ENCODE measurements at regions of chr2 and their contacts with region 1.

Region 1: GRCh38 chr2:85750587-85751575 is 2.9 kb upstream of the ATOH8 start:
- DNase-seq: peak; percentile 47
- ATAC-seq: peak; percentile 75
- H3K4me3 ChIP-seq: no peak overlapping the region
- H3K27ac ChIP-seq: no peak overlapping the region; the same call in 1 of the 2 replicates
- H3K4me1 ChIP-seq: peaks cover 20 to 36% of the 10 kb centered on the region in 2 experiments
- H3K27me3 ChIP-seq: peaks cover 50% of the 10 kb centered on the region
- CTCF ChIP-seq: peak; percentile 89 to 94 (median 91)
- POLR2A ChIP-seq: no peak
- RAD21 ChIP-seq: peak; percentile 91

Region 2: DNA sequence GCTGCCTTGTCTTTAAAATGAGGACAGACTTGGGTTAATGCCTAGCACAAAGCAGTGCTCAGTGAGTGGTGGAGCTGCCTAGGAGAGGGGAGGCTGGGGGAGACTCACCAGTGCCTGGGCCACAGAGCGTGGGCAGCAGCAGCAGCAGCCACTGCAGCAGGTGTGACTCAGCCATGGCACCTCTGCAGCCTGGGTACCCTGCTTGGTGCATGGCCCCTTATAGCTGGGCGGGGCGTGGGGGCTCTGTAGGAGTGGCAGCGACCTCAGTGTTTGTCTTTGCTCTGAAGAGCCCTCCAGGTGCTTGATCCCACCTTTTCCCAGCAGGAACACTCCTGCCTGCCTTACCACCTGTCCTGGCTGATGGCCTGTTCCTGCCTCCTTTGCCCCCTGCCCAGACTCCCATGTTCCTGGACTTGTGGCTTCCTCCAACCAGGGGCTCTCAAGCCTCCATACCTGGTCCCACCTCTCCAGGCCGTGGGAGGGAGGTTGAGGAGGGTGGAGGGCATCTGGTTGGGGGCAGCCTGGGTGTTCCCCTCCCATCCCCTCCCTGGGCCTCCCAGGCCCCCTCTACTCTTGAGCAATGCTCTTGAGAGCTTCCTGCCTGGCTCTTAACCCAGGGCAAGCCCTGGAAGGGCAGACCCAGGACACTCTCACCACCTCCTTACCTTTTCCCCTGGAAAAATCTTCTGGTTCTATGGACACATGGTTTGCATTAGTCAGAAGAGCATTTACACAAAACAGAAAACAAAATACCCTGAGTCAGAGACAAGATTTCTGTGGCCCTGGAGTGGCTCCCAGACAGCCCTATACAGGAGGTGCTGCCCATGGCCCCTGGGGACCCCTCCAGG is 82.6 kb before region 1 on chr2 and contains the start of gene SFTPB:
- CTCF ChIA-PET with region 1: no interaction called
- POLR2A ChIA-PET with region 1: no interaction called
- RAD21 ChIA-PET with region 1: no interaction called
- intact Hi-C with region 1: no loop called
- DNase-seq: no peak
- ATAC-seq: no peak
- H3K4me3 ChIP-seq: no peak within 1 kb of the TSS
- H3K27ac ChIP-seq: no peak within 1 kb of the TSS
- H3K4me1 ChIP-seq: peaks cover 0 to 1% of the 10 kb centered on the region in 2 experiments; a peak in 1 of 4 replicates
- H3K27me3 ChIP-seq: no peaks in the 10 kb centered on the region
- CTCF ChIP-seq: no peak
- POLR2A ChIP-seq: no peak
- RAD21 ChIP-seq: no peak
- total RNA-seq, gene SFTPB: 13.3 TPM

Region 3: DNA sequence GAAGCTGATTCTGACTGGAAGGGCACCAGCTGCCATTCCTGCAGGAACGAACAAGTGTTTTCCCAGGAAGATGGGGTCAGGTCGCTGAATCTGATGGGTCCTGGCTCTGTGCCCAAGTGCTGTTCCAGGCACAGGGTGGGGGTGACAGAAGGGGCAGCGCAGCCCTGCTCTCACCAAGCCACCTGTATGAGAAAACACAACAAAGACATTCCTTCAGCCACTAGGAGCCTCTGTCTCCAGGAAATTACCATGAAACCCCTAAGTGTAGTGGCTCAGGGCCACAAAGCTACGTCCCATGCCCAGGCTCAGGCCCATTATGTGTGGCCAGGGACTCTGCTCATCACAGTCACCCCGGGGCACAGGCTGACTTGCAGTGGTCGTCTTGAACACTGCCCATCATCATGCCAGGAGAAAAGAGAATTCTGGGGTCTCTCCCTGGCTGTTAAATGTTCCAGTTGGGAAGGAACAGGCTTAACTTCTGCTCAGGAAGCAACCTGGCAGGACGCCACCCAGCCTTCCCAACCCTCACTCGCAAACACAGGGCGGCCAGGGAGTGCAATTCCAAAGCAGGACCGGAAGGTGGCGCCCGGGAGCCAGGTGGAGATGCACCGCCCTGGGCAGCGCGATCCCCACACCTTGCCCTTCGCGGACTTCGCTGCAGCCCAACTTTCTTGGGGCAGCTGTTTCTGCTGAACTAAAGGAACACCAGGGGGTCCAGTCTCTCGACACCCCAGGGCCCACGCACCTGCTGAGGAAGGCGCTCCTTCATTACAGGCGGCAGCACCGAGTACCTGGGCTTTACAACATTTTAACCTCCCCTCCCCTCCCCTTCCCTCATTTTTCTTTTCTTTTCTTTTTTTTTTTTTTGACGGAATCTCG is 71.8 kb before region 1 on chr2:
- CTCF ChIA-PET with region 1: no interaction called
- POLR2A ChIA-PET with region 1: no interaction called
- RAD21 ChIA-PET with region 1: no interaction called
- intact Hi-C with region 1: loop called (anchors 2 kb)
- DNase-seq: peak; percentile 50
- ATAC-seq: peak; percentile 96
- H3K4me3 ChIP-seq: peak overlapping the region; percentile 31 to 46
- H3K27ac ChIP-seq: no peak overlapping the region; the same call in 1 of the 2 replicates
- H3K4me1 ChIP-seq: peaks cover 13 to 31% of the 10 kb centered on the region in 2 experiments
- H3K27me3 ChIP-seq: no peaks in the 10 kb centered on the region
- CTCF ChIP-seq: peak; percentile 90 to 96 (median 94)
- POLR2A ChIP-seq: no peak
- RAD21 ChIP-seq: peak; percentile 92

Region 4: GRCh38 chr2:85780316-85781012 is 29.6 kb after region 1 on chr2:
- CTCF ChIA-PET with region 1: no interaction called
- POLR2A ChIA-PET with region 1: no interaction called
- RAD21 ChIA-PET with region 1: no interaction called
- intact Hi-C with region 1: no loop called
- DNase-seq: no peak
- ATAC-seq: no peak
- H3K4me3 ChIP-seq: no peak overlapping the region
- H3K27ac ChIP-seq: no peak overlapping the region
- H3K4me1 ChIP-seq: no peaks in the 10 kb centered on the region
- H3K27me3 ChIP-seq: peaks cover 2% of the 10 kb centered on the region; the same call in 1 of the 2 replicates
- CTCF ChIP-seq: no peak
- POLR2A ChIP-seq: no peak
- RAD21 ChIP-seq: no peak

Region 5: DNA sequence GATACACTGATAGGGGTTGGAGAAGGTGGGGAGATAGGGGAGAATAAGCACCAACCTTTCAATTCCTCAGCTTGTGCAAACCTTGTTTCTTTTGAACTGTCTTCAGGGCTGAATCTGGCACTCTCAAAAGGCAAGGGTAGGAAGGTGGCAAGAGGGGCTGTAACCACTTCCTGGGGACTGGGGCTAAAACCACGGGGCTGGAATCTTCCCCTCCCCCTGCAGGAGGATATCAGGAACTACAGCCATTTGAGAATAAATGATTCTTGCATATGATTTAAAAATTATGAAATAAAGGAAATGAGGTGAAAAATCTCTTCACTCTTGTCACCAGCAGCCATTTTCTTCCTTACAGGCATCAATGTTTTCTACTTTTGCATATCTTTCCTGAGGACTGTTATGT is 53.7 kb after region 1 on chr2:
- CTCF ChIA-PET with region 1: interaction called, 4 read pairs
- POLR2A ChIA-PET with region 1: no interaction called
- RAD21 ChIA-PET with region 1: interaction called in 1 of 2 experiments, 4 read pairs
- intact Hi-C with region 1: loop called (anchors 2 kb)
- DNase-seq: no peak
- ATAC-seq: peak; percentile 62
- H3K4me3 ChIP-seq: no peak overlapping the region
- H3K27ac ChIP-seq: no peak overlapping the region
- H3K4me1 ChIP-seq: peaks cover 6 to 10% of the 10 kb centered on the region in 2 experiments; a peak in 3 of 4 replicates
- H3K27me3 ChIP-seq: no peaks in the 10 kb centered on the region
- CTCF ChIP-seq: peak; percentile 75; a peak in 5 of 6 replicates
- POLR2A ChIP-seq: no peak
- RAD21 ChIP-seq: peak; percentile 66

Region 6: DNA sequence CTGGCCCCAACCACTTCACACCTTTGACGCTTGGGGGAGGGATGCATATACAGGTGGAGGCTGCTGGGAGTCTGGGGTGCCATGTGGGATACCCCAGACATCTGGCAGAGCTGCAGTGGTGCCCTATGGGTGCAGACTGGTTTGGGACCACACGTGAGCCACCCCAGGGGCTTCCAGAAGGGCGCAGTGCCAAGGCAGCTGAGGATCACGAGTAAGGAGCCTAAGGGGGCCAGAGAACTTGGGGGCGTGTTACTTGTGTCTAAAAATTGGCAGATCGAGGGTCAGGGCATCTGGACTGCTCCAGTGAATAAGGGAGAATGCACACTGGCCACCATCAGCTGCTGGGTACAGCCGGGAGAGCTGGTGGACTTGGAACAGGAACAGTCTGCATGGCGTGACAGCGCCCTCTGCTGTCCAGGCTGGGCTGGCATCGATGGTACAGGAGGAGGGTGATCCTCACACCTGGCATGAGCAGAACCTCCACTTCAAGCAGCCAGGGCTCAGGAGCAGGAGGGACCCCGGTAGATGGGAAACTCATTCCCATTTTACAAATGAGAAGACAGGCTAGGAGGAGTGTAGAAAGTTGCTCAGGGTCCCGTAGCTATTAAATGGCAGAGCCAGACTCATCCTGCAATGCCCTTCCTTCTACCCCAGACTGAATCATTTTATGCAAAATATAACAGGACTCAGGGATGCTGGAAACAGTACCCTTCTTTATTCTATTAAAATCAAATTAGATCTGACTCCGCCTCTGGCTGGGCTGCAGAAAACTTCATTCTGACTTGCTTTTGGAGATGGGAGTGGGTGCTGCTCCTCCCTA is 63.3 kb after region 1 on chr2:
- CTCF ChIA-PET with region 1: interaction called, 41 read pairs
- POLR2A ChIA-PET with region 1: no interaction called
- RAD21 ChIA-PET with region 1: interaction called, 4 to 7 read pairs
- intact Hi-C with region 1: loop called (anchors 1 kb)
- DNase-seq: peak; percentile 76
- ATAC-seq: peak; percentile 99
- H3K4me3 ChIP-seq: no peak overlapping the region
- H3K27ac ChIP-seq: no peak overlapping the region
- H3K4me1 ChIP-seq: no peaks in the 10 kb centered on the region
- H3K27me3 ChIP-seq: no peaks in the 10 kb centered on the region
- CTCF ChIP-seq: peak; percentile 93 to 98 (median 96)
- POLR2A ChIP-seq: no peak
- RAD21 ChIP-seq: peak; percentile 99

Measured in HCT116 (cell line).